Dorsolateral prefrontal cortex (tissue), 120 donors: ENCODE measurements at regions of chr17 and their contacts with region 1.

Region 1: DNA sequence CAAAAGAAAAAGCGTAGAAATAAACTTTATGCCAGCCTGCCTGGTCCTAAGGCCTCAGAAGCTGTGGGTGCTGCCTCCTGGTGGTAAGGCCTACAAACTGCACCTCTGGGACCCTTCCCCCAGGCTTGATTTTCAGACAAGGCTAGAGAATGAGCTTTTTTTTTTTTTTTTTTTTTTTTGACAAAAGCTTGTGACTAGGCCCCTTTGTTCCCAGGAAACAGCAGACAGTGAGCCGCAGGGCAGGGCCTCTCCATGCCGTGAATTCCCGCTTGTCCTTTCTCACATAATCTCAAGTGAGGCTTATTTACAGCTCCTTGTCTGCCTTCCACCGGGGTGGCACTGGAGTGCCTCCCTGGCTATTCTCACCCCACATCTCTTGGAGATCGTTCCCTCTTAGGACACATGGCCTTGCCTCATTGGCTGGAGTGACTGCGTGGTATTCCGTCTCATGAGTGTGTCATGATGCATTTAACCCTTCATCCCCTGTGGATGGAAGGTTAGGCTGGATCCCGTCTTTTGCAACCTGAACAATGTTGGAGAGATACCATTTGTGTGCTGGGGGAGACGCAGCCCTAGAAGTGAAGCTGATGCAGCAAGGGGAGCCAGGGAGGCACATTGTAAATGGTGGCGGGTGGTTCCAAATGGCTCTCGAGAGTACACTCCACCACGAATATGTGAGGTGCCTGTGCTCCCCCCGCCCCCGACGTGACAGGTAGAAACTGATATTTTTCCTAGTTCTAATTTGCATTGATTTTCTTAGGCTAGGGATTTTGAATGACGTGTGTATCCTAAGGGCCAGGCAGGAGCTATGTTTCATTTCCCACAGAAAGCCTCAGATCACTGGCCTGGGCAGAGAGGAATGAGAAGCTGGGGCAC is 49.6 kb downstream of the USP22 start:
- DNase-seq: peak; percentile 49 to 91 (median 78)
- H3K4me3 ChIP-seq: peak overlapping the region in 33 of 59 donors; percentile 8 to 59 (median 30)
- H3K27ac ChIP-seq: peak overlapping the region; percentile 5 to 98 (median 88)
- H3K27me3 ChIP-seq: no peaks in the 10 kb centered on the region
- CTCF ChIP-seq: peak; percentile 70 to 94 (median 90)

Region 2: DNA sequence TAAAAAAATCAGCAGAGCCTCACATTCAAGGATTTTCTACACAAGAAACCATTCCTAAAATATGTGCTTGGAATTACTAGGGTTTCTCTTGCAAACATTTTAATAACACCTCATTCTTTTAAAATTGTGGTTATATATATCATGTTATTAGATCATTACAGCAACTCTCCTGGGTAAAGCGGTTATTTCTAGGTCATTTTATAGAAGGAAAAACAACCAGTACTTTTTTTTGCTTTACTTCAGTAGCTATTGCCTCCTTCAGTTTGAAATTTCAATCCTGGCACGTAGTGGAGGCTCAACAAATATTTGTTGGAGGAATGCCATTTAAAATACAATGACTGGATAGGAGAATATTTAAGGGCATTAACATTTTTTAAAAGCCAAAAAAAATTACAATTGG is 193.1 kb before region 1 on chr17:
- intact Hi-C with region 1: loop called in 1 of 2 experiments (anchors 5 kb)
- DNase-seq: no peak
- H3K4me3 ChIP-seq: no peak overlapping the region
- H3K27ac ChIP-seq: no peak overlapping the region
- H3K27me3 ChIP-seq: peaks cover 0 to 2% (median 0%) of the 10 kb centered on the region in 45 donors
- CTCF ChIP-seq: no peak

Region 3: DNA sequence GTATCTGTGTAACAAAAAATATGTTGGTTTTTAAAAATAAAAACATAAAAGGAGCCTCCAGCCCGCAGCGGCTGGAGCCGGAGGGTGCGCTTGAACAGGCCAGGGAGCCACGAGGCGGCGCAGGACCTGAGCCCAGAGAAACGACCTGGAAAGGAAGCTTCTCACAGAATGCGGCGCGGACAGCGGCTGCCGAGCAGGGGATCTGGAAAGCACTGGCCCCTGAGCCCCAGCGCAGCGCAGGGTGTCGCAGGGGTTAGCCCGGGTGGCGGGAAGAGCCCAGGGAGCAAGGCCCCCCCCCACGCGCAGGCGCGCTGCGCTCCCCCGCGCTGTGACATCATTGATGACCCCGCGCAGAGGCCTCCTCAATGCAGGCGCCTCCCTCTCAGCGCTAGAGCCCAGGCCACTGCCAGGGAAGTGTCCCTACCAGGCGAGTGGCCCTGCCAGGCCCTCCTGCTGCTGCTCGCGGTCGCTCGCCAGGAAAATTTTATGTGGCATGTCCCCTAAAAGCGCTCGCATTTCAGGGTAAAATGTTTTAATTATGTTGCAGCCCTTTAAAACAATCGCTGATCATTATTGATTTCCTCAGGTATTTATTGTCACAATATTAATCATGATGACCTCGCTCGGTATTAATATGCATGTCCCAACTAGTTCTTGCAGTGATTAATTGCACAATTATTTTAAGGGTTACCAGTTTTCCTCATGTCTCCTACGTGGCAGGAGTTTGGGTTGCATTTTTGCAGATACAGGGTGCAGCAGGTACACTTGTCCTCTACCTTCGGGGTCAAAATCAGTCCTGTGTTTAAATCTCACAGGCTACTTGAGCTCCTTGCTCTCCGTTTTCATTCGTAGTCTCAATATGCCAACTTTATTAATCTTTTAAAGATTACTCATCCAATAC is 84.6 kb before region 1 on chr17:
- intact Hi-C with region 1: loop called (anchors 2 to 5 kb)
- DNase-seq: peak; percentile 89 to 96 (median 93)
- H3K4me3 ChIP-seq: peak overlapping the region; percentile 41 to 83 (median 67)
- H3K27ac ChIP-seq: peak overlapping the region; percentile 63 to 99 (median 95)
- H3K27me3 ChIP-seq: no peaks in the 10 kb centered on the region
- CTCF ChIP-seq: peak; percentile 29 to 81 (median 68)

Region 4: DNA sequence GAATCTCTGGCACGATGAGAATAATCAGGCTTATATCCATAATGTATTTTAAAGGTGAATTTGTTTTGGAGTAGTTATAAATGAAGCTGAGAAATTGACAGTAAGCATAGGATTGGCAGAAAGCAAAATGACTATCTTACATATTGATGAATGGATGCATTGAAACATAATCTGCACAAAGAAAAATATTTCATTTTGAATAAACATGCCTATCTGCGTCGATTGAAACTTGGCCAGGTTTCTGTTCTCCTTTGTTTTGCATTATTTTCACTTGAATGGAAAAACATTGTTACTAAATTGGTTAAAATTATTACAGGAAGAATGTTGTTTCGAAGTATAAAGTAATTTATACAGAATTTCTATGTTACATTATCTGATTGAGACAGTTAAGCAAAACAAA is 78.6 kb before region 1 on chr17:
- intact Hi-C with region 1: loop called (anchors 2 to 5 kb)
- DNase-seq: no peak
- H3K4me3 ChIP-seq: no peak overlapping the region
- H3K27ac ChIP-seq: no peak overlapping the region
- H3K27me3 ChIP-seq: no peaks in the 10 kb centered on the region
- CTCF ChIP-seq: no peak